ENCODE measurements at regions of chr17 and their contacts with region 1.

Region 1: DNA sequence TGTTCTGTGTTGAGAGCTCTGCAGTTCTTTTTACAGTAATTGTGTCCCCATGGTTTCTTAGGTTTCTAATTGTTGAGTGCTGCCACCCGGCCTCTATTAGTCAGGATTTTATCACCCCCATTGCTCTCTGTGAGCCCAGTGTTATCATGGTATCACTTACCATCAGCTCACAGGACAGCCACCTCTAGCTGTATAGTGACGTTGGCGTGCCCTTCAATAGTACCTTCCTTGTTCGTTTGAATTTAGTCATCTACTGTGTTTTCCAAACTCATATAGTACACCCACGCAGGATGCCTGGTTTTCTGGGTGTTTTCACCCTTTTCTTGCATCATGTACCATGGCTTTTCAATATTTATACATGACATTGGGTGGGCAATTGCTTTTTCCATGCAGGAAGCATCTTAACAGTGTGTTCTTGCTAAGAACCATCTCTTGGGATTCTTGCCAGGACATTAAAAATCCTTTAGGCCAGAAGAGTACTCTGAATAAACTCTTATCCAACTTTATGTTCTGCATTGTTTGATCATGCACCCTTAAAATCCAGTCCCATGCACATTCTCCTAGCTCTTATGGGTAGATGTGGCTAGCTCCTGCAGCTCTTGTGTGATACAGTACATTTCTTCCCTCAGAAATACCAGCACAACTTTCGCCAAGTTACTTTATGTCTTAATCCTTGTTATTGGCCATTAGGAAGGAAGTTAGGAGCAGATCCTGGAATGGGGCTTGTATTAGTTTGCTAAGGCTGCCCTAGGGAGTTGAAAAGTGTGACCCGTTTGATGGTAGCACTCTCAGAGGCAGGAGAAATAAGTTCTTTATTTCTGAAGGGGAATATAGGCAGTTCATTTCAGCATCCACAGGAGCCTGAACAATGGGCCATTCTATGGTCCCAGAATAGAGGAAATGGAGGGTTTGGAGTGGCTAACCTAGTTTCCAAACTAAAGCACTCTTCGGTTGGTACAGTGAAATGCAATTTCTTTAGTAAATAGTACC is 11.3 kb upstream of the ABCA10 start:
- DNase-seq: no peak
- ATAC-seq: no peak
- H3K4me3 Mint-ChIP-seq: no peak overlapping the region
- H3K27ac Mint-ChIP-seq: no peak overlapping the region
- H3K4me1 Mint-ChIP-seq: no peaks in the 10 kb centered on the region
- H3K27me3 Mint-ChIP-seq: no peaks in the 10 kb centered on the region

Region 2: GRCh38 chr17:68771867-68772515 is 467.9 kb before region 1 on chr17:
- CTCF ChIA-PET with region 1: interaction called, 11 read pairs
- POLR2A ChIA-PET with region 1: no interaction called
- DNase-seq: peak; percentile 30
- ATAC-seq: peak; percentile 53
- H3K4me3 Mint-ChIP-seq: peak overlapping the region; percentile 42
- H3K27ac Mint-ChIP-seq: no peak overlapping the region
- H3K4me1 Mint-ChIP-seq: peaks cover 5% of the 10 kb centered on the region
- H3K27me3 Mint-ChIP-seq: no peaks in the 10 kb centered on the region

Region 3: DNA sequence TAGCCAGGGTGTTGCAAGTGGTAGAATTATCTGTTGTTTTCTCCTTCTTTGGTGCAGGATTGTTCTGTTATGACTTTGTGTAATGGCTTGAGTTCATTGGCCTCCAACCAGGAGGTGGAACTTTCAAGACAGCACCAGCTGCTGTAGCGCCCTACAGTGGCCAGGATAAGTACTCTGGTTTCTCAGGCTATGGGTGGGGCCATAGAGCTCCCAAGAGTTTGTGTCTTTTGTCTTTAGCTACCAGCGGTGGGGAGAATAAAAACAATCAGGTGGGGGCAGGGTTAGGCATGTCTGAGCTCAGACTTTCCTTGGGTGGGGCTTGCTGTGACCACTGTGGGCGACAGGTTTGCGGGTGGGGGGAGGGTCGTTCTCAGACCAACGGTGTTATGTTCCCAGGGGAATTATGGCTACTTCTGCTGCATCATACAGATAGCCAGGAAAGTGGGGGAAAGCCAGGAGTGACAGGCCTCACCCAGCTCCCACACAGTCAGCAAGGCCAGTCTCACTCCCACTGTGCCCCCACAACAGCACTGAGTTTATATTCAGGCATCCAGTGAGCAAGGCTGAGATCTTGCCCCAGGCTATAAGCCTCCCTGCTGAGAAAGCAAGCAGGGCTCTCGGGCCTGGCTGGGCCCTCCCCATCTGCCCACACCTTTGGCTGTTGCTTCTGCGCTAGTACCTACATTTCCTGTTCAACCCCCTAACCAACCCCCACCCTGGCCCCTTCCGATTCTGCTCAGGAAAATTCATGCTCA is 26.7 kb before region 1 on chr17:
- CTCF ChIA-PET with region 1: no interaction called
- POLR2A ChIA-PET with region 1: no interaction called
- DNase-seq: no peak
- ATAC-seq: no peak
- H3K4me3 Mint-ChIP-seq: no peak overlapping the region
- H3K27ac Mint-ChIP-seq: no peak overlapping the region
- H3K4me1 Mint-ChIP-seq: no peaks in the 10 kb centered on the region
- H3K27me3 Mint-ChIP-seq: no peaks in the 10 kb centered on the region

Region 4: GRCh38 chr17:69492410-69493071 is 252.6 kb after region 1 on chr17:
- CTCF ChIA-PET with region 1: no interaction called
- POLR2A ChIA-PET with region 1: no interaction called
- DNase-seq: no peak
- ATAC-seq: no peak
- H3K4me3 Mint-ChIP-seq: no peak overlapping the region
- H3K27ac Mint-ChIP-seq: no peak overlapping the region
- H3K4me1 Mint-ChIP-seq: no peaks in the 10 kb centered on the region
- H3K27me3 Mint-ChIP-seq: no peaks in the 10 kb centered on the region

Measured in activated CD8-positive, alpha-beta T cell treated with anti-CD3 and anti-CD28 coated beads, Interleukin-2, amount 10 ng/mL, durations not matched to agents 7 days and 5 days (primary cell).